ENCODE measurements at regions of chr22 and their contacts with region 1.

Region 1: DNA sequence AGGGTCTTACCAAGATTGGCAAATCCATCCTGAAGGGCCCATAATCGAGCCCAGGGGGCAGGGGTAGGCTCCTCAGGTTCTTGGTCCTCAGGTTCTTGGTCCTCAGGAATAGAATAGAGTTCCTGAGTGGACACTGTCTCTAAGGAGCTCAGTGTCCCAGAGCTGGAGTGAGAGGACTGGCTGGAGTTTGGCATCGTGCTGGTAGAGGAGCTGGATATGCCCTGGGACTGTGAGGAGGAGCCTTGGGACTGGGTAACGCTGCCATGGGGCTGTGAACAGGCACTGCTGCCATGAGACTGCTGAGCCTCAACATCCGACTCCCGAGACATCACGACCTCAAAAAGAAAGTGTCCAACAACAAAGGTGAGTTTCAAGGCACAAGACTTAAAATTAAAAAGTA is 7.2 kb downstream of the CHEK2 start:
- DNase-seq: no peak
- ATAC-seq: no peak
- H3K4me3 ChIP-seq: no peak overlapping the region
- H3K27ac ChIP-seq: no peak overlapping the region
- H3K4me1 ChIP-seq: no peaks in the 10 kb centered on the region
- H3K27me3 ChIP-seq: no peaks in the 10 kb centered on the region

Region 2: GRCh38 chr22:28656181-28656580 is 78.2 kb before region 1 on chr22:
- intact Hi-C with region 1: loop called in 1 of 4 experiments (anchors 5 kb)
- DNase-seq: no peak
- ATAC-seq: peak in 1 of 2 donors; percentile 37
- H3K4me3 ChIP-seq: no peak overlapping the region
- H3K27ac ChIP-seq: no peak overlapping the region
- H3K4me1 ChIP-seq: no peaks in the 10 kb centered on the region
- H3K27me3 ChIP-seq: no peaks in the 10 kb centered on the region